Heart left ventricle (tissue), 16 donors: ENCODE measurements at regions of chr14 and their contacts with region 1.

Region 1: DNA sequence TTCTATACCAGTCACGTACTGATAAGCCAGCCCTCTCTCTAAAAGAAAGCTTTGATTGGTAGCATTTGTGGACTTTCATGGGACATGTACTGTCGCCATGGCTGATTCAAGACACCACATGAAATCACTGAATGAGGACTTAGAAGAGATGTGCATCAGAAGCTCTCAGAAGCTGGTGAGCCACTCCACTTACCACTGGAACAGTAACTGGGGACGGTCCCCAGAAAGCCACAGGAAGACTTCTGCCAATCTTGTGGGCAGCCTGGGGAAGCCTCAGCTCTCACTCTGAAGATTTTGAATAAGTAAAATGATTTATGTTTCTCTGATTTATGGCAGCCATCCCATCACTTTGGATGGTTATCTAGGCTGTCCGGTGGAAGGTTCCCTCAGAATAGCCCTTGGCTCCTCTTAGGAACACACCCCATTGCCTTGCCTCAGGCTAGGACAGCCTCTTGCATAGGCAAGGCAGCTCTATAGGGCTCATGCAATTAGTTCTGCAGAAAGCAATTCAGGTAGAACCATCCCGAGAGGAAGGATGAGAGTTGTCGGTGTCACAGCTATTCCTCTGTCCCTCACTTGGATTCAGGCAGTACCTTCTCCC is 9.8 kb downstream of the DHRS1 start:
- DNase-seq: no peak
- ATAC-seq: no peak
- H3K4me3 ChIP-seq: no peak overlapping the region
- H3K27ac ChIP-seq: no peak overlapping the region
- H3K4me1 ChIP-seq: no peaks in the 10 kb centered on the region
- H3K27me3 ChIP-seq: no peaks in the 10 kb centered on the region
- CTCF ChIP-seq: no peak
- POLR2A ChIP-seq: no peak

Region 2: DNA sequence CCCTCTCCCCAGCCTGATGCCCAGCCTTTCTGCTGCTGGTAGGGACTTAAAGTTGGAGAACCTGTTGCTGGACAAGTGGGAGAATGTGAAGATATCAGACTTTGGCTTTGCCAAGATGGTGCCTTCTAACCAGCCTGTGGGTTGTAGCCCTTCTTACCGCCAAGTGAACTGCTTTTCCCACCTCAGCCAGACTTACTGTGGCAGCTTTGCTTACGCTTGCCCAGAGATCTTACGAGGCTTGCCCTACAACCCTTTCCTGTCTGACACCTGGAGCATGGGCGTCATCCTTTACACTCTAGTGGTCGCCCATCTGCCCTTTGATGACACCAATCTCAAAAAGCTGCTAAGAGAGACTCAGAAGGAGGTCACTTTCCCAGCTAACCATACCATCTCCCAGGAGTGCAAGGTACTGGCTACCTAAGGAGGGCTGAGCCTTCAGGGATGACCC is 82.6 kb before region 1 on chr14:
- intact Hi-C with region 1: no loop called
- DNase-seq: no peak
- ATAC-seq: no peak
- H3K4me3 ChIP-seq: no peak overlapping the region
- H3K27ac ChIP-seq: no peak overlapping the region
- H3K4me1 ChIP-seq: peaks cover 0 to 8% (median 0%) of the 10 kb centered on the region in 12 donors
- H3K27me3 ChIP-seq: no peaks in the 10 kb centered on the region
- CTCF ChIP-seq: no peak
- POLR2A ChIP-seq: no peak

Region 3: DNA sequence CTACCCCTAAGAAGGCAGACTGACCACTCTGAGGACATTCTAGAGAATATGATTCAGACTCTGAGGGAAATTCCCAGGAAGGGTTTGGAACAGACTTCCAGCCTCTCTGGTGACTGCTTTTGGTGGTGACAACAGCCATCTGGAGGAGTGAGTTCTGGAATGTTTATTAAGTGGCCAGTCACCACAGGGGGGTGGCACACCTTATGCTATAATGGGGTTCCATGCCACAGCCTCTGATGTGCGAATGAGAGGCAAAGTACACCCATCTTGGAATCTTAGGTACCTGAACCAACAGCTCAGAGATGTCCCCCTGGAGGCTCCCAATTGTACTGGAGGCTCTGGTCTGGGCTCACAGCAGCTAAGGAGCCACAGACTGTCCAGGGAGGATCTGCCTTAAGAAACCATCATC is 37.9 kb before region 1 on chr14:
- intact Hi-C with region 1: loop called in 1 of 10 experiments (anchors 2 kb)
- DNase-seq: no peak
- ATAC-seq: no peak
- H3K4me3 ChIP-seq: no peak overlapping the region
- H3K27ac ChIP-seq: no peak overlapping the region
- H3K4me1 ChIP-seq: peaks cover 0 to 23% (median 0%) of the 10 kb centered on the region in 12 donors
- H3K27me3 ChIP-seq: no peaks in the 10 kb centered on the region
- CTCF ChIP-seq: no peak
- POLR2A ChIP-seq: no peak